ENCODE measurements at regions of chr1 and their contacts with region 1.

Region 1: GRCh38 chr1:32107742-32108661 is at the start of gene KPNA6:
- DNase-seq: peak; percentile 93 to 95 (median 94)
- H3K4me3 ChIP-seq: peak within 1 kb of the TSS; percentile 67 to 83
- H3K4me3 Mint-ChIP-seq: peak within 1 kb of the TSS; percentile 96 to 100 (median 100)
- H3K27ac ChIP-seq: peak within 1 kb of the TSS; percentile 94
- H3K27ac Mint-ChIP-seq: peak within 1 kb of the TSS; percentile 93 to 100 (median 97)
- H3K4me1 ChIP-seq: peaks cover 47% of the 10 kb centered on the region
- H3K4me1 Mint-ChIP-seq: peaks cover 31 to 62% (median 45%) of the 10 kb centered on the region in 4 donors
- H3K27me3 ChIP-seq: no peaks in the 10 kb centered on the region
- H3K27me3 Mint-ChIP-seq: no peaks in the 10 kb centered on the region
- total RNA-seq, gene KPNA6: 60.3 to 62.5 TPM

Region 2: DNA sequence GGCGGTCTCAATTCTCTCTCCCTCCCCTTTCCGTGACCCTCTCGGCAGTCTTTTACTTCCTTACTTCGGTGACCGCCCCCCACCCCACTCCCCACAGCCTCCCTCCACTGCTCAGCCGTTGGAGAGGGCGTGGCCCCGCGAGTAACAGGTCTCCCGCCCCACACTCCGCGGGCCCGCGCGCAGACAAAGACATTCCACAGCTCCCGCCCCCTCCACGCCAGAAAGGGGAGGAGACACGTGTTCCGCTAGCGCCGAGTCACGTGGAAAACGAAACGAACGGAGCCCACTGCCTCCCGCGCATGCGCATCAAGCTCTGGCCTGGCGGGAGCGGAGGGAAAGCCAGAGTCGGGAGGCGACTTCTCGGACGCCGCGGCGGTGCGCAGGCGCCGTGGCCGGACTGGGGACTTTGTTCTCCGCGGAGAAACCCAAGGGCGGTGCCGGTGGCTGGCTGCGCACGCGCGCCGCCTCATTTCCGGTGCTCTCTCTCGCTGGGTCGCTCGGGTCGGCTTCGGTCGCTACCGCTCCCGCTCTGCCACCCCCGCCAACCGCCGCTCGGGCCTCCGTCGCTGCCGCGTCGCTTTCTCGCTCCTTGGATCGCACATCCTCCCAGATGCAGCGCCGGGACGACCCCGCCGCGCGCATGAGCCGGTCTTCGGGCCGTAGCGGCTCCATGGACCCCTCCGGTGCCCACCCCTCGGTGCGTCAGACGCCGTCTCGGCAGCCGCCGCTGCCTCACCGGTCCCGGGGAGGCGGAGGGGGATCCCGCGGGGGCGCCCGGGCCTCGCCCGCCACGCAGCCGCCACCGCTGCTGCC is 94.4 kb before region 1 on chr1 and contains the start of gene KHDRBS1:
- CTCF ChIA-PET with region 1: interaction called, 6 read pairs
- POLR2A ChIA-PET with region 1: interaction called, 18 read pairs
- intact Hi-C with region 1: no loop called
- DNase-seq: peak; percentile 98 to 99 (median 99)
- H3K4me3 ChIP-seq: peak within 1 kb of the TSS; percentile 89 to 100
- H3K4me3 Mint-ChIP-seq: peak within 1 kb of the TSS; percentile 89 to 99 (median 98)
- H3K27ac ChIP-seq: peak within 1 kb of the TSS; percentile 95
- H3K27ac Mint-ChIP-seq: peak within 1 kb of the TSS; percentile 97 to 99 (median 98)
- H3K4me1 ChIP-seq: peaks cover 37% of the 10 kb centered on the region
- H3K4me1 Mint-ChIP-seq: peaks cover 20 to 38% (median 30%) of the 10 kb centered on the region in 4 donors
- H3K27me3 ChIP-seq: no peaks in the 10 kb centered on the region
- H3K27me3 Mint-ChIP-seq: no peaks in the 10 kb centered on the region
- total RNA-seq, gene KHDRBS1: 114 to 122 TPM

Region 3: DNA sequence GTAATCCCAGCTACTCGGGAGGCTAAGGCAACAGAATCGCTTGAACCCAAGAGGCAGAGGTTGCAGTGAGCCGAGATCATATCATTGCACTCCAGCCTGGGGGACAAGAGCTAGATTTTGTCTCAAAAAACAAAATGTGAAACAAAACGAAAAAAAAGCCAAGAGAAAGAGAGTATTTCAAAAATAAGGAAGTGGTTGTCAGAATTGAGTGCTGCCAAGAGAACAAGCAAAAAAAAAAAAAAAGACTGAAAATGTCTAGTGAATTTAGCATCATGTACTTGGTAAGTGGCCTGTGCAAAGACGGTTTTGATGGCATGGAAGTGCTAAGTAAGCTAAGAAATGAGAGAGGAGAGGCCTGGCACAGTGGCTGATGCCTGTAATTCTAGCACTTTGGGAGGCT is 14.1 kb after region 1 on chr1:
- CTCF ChIA-PET with region 1: interaction called, 11 read pairs
- POLR2A ChIA-PET with region 1: interaction called, 4 read pairs
- intact Hi-C with region 1: no loop called
- DNase-seq: no peak
- H3K4me3 ChIP-seq: no peak overlapping the region
- H3K4me3 Mint-ChIP-seq: peak overlapping the region in 4 of 8 donors; percentile 8 to 32 (median 24)
- H3K27ac ChIP-seq: no peak overlapping the region
- H3K27ac Mint-ChIP-seq: peak overlapping the region in 5 of 7 donors; percentile 0 to 59 (median 23)
- H3K4me1 ChIP-seq: peaks cover 75% of the 10 kb centered on the region
- H3K4me1 Mint-ChIP-seq: peaks cover 24 to 58% (median 43%) of the 10 kb centered on the region in 4 donors
- H3K27me3 ChIP-seq: no peaks in the 10 kb centered on the region
- H3K27me3 Mint-ChIP-seq: no peaks in the 10 kb centered on the region

Region 4: DNA sequence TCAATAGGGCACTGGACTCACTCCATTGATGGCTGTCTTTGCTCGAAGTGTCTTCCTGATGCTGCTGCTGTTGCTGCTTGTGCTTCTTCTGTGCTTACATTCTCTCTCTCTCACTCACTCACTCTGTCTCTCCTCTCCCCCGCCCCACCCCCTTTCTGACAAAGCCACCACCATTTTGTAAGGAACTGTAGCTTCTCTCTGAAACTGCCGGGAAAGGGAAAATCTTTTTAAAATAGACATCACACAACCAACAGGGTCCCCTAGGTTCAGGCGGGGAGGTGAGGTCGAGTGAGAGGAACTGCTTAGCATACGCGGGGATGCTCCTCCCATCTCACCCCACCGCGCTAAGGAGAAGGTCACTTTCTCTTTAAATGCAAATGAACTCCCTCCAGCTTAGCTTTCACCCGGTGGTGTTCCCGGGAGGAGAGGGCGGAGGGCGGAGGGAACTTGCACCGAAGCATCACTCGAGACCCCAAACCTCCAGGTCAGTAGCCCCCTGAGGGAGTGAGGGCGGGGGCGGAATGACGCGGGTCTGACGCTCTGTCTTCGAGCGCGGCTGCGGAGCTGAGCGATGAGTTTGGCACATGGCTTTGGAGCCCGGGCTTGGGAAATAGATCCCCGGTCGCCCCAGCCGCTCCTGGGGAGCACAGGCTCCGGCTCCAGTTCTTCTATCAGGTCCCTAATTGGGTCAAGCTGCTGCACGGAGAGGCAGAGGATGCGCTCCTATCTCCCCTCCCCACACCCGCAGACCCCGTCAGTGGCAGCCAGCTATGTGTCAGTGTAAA is 92.4 kb after region 1 on chr1 and contains the start of gene CCDC28B:
- CTCF ChIA-PET with region 1: interaction called, 4 read pairs
- POLR2A ChIA-PET with region 1: interaction called, 19 read pairs
- intact Hi-C with region 1: no loop called
- DNase-seq: peak; percentile 51 to 73 (median 58)
- H3K4me3 ChIP-seq: peak within 1 kb of the TSS; percentile 57 to 85
- H3K4me3 Mint-ChIP-seq: peak within 1 kb of the TSS; percentile 85 to 95 (median 92)
- H3K27ac ChIP-seq: peak within 1 kb of the TSS; percentile 84
- H3K27ac Mint-ChIP-seq: peak within 1 kb of the TSS; percentile 87 to 97 (median 95)
- H3K4me1 ChIP-seq: peaks cover 59% of the 10 kb centered on the region
- H3K4me1 Mint-ChIP-seq: peaks cover 38 to 76% (median 56%) of the 10 kb centered on the region in 4 donors
- H3K27me3 ChIP-seq: no peaks in the 10 kb centered on the region
- H3K27me3 Mint-ChIP-seq: no peaks in the 10 kb centered on the region
- total RNA-seq, gene CCDC28B: 4.2 to 5.1 TPM

Region 5: DNA sequence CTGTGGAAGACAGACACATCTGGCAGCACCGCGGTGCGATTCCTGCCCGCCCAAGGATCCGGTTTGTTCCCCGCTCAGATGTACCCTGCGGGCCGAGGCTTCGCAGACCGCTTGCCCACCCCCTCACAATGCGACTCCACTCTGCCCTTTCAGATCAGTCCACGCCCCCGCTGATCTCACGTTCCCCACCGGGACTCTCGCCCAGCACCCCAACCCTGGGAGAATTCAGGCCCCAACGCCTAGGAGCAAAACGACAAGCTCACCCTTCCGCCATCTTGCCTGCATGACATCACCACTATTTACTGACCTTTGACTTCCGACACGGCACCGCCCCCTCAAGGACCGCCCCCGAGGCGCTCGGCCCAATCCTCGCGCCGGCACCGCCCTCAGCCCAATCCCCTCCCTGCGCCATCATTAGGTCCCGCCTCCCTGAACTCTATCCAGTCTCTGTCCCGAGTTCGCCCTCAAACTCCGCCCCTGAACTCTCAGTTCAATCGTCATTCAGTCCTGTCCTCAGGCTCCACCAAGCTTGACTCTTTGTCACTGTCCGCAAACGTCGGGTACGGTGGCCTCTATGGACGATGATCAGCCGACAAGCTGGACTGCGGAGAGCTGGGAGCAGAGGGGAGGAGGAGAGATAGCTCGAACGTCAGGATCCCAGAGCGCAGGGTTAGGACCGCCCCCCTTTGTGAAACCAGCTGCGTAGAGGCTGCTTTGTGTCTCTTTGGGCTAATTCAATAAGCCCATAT is 286.3 kb after region 1 on chr1 and contains the start of gene BSDC1:
- CTCF ChIA-PET with region 1: no interaction called
- POLR2A ChIA-PET with region 1: interaction called, 26 read pairs
- intact Hi-C with region 1: loop called (anchors 5 kb)
- DNase-seq: peak; percentile 98 to 99 (median 99)
- H3K4me3 ChIP-seq: peak within 1 kb of the TSS; percentile 87
- H3K4me3 Mint-ChIP-seq: peak within 1 kb of the TSS; percentile 99 to 100 (median 100)
- H3K27ac ChIP-seq: peak within 1 kb of the TSS; percentile 95
- H3K27ac Mint-ChIP-seq: peak within 1 kb of the TSS; percentile 92 to 100 (median 100)
- H3K4me1 ChIP-seq: peaks cover 43% of the 10 kb centered on the region
- H3K4me1 Mint-ChIP-seq: peaks cover 5 to 25% (median 19%) of the 10 kb centered on the region in 4 donors
- H3K27me3 ChIP-seq: no peaks in the 10 kb centered on the region
- H3K27me3 Mint-ChIP-seq: peaks cover 0 to 1% of the 10 kb centered on the region in 2 donors
- total RNA-seq, gene BSDC1: 106 to 112 TPM